ENCODE measurements at regions of chr14 and their contacts with region 1.

Region 1: DNA sequence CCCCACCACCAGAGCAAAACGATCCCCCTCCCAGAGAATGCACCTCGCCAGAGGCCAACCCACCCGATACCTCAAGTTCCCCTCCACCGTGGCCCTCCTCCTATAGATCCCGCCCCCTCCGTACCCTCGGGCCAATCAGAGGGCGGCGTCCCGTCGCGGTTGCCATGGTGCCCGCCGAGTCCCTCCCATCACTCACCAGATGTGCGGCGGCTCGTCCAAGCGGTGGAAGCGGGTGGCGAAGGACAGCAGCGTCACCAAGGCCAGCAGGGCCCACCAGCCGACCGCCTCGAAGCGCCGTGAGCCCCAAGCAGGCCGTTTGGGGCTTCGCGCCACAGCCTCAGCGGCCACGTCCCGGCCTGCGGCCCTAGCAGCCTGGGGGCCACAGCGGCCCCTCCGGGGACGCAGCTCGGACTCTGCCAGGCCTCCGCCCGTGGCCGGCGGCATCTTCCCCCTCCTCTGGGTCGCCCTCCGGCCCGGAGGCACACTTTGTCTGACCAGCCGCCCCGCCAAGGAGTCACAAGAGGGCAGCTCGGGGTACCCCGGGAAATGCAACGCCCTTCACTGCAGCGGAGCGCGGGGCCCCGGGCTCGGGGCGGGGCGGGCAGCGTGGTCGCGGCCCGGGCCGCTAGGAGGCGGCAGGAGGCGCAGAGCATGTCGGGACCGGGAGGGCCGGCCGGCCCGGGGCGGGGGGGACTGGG is at the start of gene POMT2:
- DNase-seq: peak; percentile 86 to 95 (median 90)
- ATAC-seq: peak; percentile 47
- H3K4me3 ChIP-seq: peak within 1 kb of the TSS; percentile 93
- H3K4me3 Mint-ChIP-seq: peak within 1 kb of the TSS; percentile 100
- H3K27ac ChIP-seq: peak within 1 kb of the TSS; percentile 95 to 98
- H3K27ac Mint-ChIP-seq: peak within 1 kb of the TSS; percentile 100
- H3K4me1 ChIP-seq: peaks cover 23% of the 10 kb centered on the region
- H3K4me1 Mint-ChIP-seq: peaks cover 31% of the 10 kb centered on the region
- H3K27me3 ChIP-seq: no peaks in the 10 kb centered on the region
- H3K27me3 Mint-ChIP-seq: no peaks in the 10 kb centered on the region
- CTCF ChIP-seq: peak; percentile 38
- total RNA-seq, gene POMT2: 7.6 to 8.2 TPM

Region 2: DNA sequence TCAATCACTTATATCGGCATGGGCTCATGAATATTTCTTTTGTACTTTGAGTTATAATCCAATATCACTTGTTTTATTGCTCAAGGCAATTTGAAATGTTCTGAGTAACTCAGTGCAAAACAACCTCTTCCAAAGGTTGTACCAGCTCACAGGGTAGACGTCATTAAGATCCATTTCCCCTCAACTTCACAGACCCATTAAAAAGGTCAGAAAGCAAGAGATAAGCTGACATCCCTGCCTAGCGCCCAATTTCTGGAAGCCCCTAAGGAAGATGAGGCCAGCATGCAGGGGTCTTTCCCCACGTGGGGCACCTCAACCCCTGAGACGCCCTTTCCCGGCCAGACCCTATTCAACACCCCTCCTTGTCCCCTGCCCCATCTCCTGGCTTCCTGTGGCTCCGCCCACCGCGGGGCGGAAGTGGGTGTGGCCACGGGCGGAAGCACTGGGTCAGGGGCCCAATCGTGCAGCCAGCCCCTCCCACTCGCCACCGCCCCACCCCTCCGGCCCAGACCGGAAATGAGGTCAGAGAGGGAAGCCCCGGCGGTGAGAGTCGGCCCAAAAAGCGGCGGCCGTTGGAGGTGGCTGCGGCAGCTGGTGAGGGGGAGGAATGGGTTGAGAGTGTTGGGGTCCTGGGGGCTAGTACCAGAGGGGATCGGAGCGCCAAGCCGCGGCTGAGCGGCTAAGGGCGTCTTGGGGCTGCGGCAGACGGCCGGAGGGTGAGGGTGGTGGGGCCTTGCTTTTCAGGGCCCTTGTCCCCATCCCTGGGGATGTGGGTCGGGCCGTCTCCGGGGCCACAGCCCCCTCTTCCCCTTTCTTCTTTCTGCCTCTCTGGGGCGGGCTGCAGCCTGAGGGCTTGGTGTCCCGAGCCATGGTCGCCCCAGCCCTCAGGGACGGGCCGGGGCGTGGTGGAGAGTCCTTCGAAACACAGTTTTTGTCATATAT is 1168.7 kb before region 1 on chr14 and contains the start of gene GPATCH2L:
- CTCF ChIA-PET with region 1: no interaction called
- POLR2A ChIA-PET with region 1: no interaction called
- intact Hi-C with region 1: loop called in 1 of 2 experiments (anchors 5 kb)
- DNase-seq: peak; percentile 93 to 99 (median 96)
- ATAC-seq: peak; percentile 85
- H3K4me3 ChIP-seq: peak within 1 kb of the TSS; percentile 97
- H3K4me3 Mint-ChIP-seq: peak within 1 kb of the TSS; percentile 96
- H3K27ac ChIP-seq: peak within 1 kb of the TSS; percentile 94 to 95
- H3K27ac Mint-ChIP-seq: peak within 1 kb of the TSS; percentile 95
- H3K4me1 ChIP-seq: peaks cover 39% of the 10 kb centered on the region
- H3K4me1 Mint-ChIP-seq: peaks cover 57% of the 10 kb centered on the region
- H3K27me3 ChIP-seq: no peaks in the 10 kb centered on the region
- H3K27me3 Mint-ChIP-seq: no peaks in the 10 kb centered on the region
- CTCF ChIP-seq: no peak
- total RNA-seq, gene GPATCH2L: 56.0 to 61.5 TPM

Region 3: GRCh38 chr14:76812211-76813044 is 508.0 kb before region 1 on chr14 and contains the start of gene ANGEL1:
- CTCF ChIA-PET with region 1: interaction called, 3 read pairs
- POLR2A ChIA-PET with region 1: interaction called, 3 read pairs
- intact Hi-C with region 1: loop called in 1 of 2 experiments (anchors 2 kb)
- DNase-seq: peak; percentile 94 to 99 (median 98)
- ATAC-seq: peak; percentile 90
- H3K4me3 ChIP-seq: peak within 1 kb of the TSS; percentile 84
- H3K4me3 Mint-ChIP-seq: peak within 1 kb of the TSS; percentile 97
- H3K27ac ChIP-seq: peak within 1 kb of the TSS; percentile 67 to 85
- H3K27ac Mint-ChIP-seq: peak within 1 kb of the TSS; percentile 96
- H3K4me1 ChIP-seq: peaks cover 28% of the 10 kb centered on the region
- H3K4me1 Mint-ChIP-seq: peaks cover 35% of the 10 kb centered on the region
- H3K27me3 ChIP-seq: no peaks in the 10 kb centered on the region
- H3K27me3 Mint-ChIP-seq: no peaks in the 10 kb centered on the region
- CTCF ChIP-seq: no peak
- total RNA-seq, gene ANGEL1: 10.1 to 10.4 TPM

Region 4: DNA sequence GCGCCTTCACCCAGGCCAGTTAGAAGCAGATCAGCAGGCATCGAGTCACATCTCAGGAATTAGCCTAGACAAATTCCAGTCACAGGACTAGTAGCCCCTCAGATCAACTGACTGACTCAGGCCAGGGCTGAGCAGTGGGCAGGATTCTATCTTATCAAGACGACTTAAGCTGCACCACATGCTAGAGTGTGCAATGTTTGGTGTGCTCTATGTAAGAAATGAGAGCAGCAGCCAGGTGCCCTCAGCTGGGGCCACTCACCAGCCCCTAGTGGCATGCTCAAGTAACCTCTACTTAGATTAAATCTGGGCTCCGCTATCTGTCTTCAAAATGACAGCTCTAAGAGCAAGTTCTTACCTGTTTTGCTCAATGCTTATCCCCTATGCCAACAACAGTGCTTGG is 29.6 kb before region 1 on chr14:
- CTCF ChIA-PET with region 1: no interaction called
- POLR2A ChIA-PET with region 1: no interaction called
- intact Hi-C with region 1: no loop called
- DNase-seq: no peak
- ATAC-seq: no peak
- H3K4me3 ChIP-seq: no peak overlapping the region
- H3K4me3 Mint-ChIP-seq: no peak overlapping the region
- H3K27ac ChIP-seq: no peak overlapping the region
- H3K27ac Mint-ChIP-seq: no peak overlapping the region
- H3K4me1 ChIP-seq: no peaks in the 10 kb centered on the region
- H3K4me1 Mint-ChIP-seq: no peaks in the 10 kb centered on the region
- H3K27me3 ChIP-seq: no peaks in the 10 kb centered on the region
- H3K27me3 Mint-ChIP-seq: no peaks in the 10 kb centered on the region
- CTCF ChIP-seq: no peak

Region 5: GRCh38 chr14:77376771-77377501 is 56.5 kb after region 1 on chr14 and contains the starts of genes SAMD15 and TMED8:
- CTCF ChIA-PET with region 1: interaction called, 6 read pairs
- POLR2A ChIA-PET with region 1: interaction called, 30 read pairs
- intact Hi-C with region 1: loop called (anchors 2 kb)
- DNase-seq: peak; percentile 61 to 93 (median 79)
- ATAC-seq: peak; percentile 96
- H3K4me3 ChIP-seq: peak within 1 kb of the TSS; percentile 78
- H3K4me3 Mint-ChIP-seq: peak within 1 kb of the TSS; percentile 95
- H3K27ac ChIP-seq: peak within 1 kb of the TSS; percentile 67 to 89
- H3K27ac Mint-ChIP-seq: peak within 1 kb of the TSS; percentile 74
- H3K4me1 ChIP-seq: peaks cover 21% of the 10 kb centered on the region
- H3K4me1 Mint-ChIP-seq: peaks cover 41% of the 10 kb centered on the region
- H3K27me3 ChIP-seq: no peaks in the 10 kb centered on the region
- H3K27me3 Mint-ChIP-seq: no peaks in the 10 kb centered on the region
- CTCF ChIP-seq: no peak
- total RNA-seq, gene SAMD15: 0.34 TPM in 1 of 2 experiments, not detected in the other
- total RNA-seq, gene TMED8: 4.9 to 5.1 TPM

Region 6: DNA sequence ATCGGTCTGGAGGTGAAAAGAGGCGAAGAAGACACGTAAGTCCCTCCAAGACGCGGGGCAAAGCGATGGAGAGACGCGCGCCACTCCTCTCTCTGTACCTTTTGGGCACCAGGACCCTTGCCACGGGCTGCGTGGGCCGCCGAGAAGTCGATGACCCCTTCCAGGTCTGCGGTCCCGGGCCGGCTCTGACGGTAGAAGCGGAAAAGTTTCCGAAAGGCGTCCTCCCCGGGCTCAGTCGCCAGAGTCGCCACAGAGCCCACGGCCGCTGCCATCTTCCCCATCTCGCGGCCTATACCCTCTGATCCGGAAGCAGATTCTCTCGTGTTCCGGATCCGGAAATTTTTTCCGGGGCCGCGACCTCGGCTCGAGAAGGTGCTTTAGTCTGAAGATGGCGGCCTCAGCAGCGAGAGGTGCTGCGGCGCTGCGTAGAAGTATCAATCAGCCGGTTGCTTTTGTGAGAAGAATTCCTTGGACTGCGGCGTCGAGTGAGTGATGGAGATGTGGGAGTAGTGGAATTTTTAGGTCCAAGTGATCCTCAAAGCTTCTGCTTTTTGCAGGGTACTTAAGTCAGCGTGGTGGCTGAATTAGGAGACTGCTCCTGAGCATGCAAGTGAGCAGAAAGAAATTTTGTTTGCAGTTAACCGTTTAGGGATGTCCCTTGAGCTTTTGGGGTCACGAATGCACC is 387.5 kb after region 1 on chr14 and contains the starts of genes ALKBH1 and SLIRP:
- CTCF ChIA-PET with region 1: no interaction called
- POLR2A ChIA-PET with region 1: no interaction called
- intact Hi-C with region 1: loop called (anchors 5 kb)
- DNase-seq: peak; percentile 79 to 93 (median 84)
- ATAC-seq: peak; percentile 98
- H3K4me3 ChIP-seq: peak within 1 kb of the TSS; percentile 82
- H3K4me3 Mint-ChIP-seq: peak within 1 kb of the TSS; percentile 95
- H3K27ac ChIP-seq: peak within 1 kb of the TSS; percentile 10 to 65
- H3K27ac Mint-ChIP-seq: peak within 1 kb of the TSS; percentile 87
- H3K4me1 ChIP-seq: peaks cover 19% of the 10 kb centered on the region
- H3K4me1 Mint-ChIP-seq: peaks cover 54% of the 10 kb centered on the region
- H3K27me3 ChIP-seq: no peaks in the 10 kb centered on the region
- H3K27me3 Mint-ChIP-seq: no peaks in the 10 kb centered on the region
- CTCF ChIP-seq: no peak
- total RNA-seq, gene ALKBH1: 5.6 to 8.5 TPM
- total RNA-seq, gene SLIRP: 46.8 to 49.7 TPM